CD8-positive, alpha-beta T cell (primary cell): ENCODE measurements at regions of chr13 and their contacts with region 1.

Region 1: GRCh38 chr13:74104661-74105275 is 29.4 kb downstream of the KLF12 start:
- DNase-seq: no peak
- ATAC-seq: no peak
- H3K4me3 ChIP-seq: no peak overlapping the region
- H3K4me3 Mint-ChIP-seq: no peak overlapping the region
- H3K27ac ChIP-seq: no peak overlapping the region
- H3K27ac Mint-ChIP-seq: no peak overlapping the region
- H3K4me1 ChIP-seq: peaks cover 15% of the 10 kb centered on the region
- H3K4me1 Mint-ChIP-seq: peaks cover 75% of the 10 kb centered on the region
- H3K27me3 ChIP-seq: no peaks in the 10 kb centered on the region
- H3K27me3 Mint-ChIP-seq: no peaks in the 10 kb centered on the region
- CTCF ChIP-seq: no peak

Region 2: DNA sequence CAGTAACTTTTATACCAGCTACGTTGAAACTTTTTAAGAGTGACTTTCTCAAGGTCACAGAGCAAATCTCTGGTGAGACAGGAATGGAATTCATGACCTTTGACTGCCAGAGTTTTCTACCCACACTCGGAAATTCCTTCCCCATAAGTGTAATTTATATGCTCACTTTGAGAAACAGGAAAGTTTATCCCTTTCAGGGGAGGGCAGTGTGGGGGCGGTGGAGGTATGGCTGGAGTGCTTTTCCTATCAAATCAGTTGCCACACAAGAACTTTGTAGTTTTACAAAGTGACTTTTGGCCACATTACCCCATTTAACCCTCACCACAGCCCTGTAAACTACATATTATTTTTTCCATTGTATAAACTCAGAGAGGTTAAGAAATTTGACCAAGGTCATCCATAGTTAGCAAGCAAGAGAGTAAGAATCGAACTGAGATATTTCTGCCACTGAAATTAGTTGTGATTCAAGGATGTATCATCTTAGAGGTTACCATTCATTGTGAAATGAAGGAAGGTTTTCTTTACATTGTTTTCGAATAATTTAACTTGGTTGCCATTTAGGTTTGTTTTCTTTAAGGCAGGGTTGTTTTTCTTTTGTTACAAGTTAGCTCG is 23.5 kb after region 1 on chr13:
- CTCF ChIA-PET with region 1: no interaction called
- POLR2A ChIA-PET with region 1: interaction called, 6 read pairs
- intact Hi-C with region 1: loop called in 1 of 2 experiments (anchors 2 kb)
- DNase-seq: no peak
- ATAC-seq: no peak
- H3K4me3 ChIP-seq: no peak overlapping the region
- H3K4me3 Mint-ChIP-seq: peak overlapping the region; percentile 47
- H3K27ac ChIP-seq: peak overlapping the region in 1 of 2 experiments; percentile 82
- H3K27ac Mint-ChIP-seq: peak overlapping the region; percentile 84
- H3K4me1 ChIP-seq: peaks cover 49% of the 10 kb centered on the region
- H3K4me1 Mint-ChIP-seq: peaks cover 79% of the 10 kb centered on the region
- H3K27me3 ChIP-seq: no peaks in the 10 kb centered on the region
- H3K27me3 Mint-ChIP-seq: no peaks in the 10 kb centered on the region
- CTCF ChIP-seq: no peak

Region 3: DNA sequence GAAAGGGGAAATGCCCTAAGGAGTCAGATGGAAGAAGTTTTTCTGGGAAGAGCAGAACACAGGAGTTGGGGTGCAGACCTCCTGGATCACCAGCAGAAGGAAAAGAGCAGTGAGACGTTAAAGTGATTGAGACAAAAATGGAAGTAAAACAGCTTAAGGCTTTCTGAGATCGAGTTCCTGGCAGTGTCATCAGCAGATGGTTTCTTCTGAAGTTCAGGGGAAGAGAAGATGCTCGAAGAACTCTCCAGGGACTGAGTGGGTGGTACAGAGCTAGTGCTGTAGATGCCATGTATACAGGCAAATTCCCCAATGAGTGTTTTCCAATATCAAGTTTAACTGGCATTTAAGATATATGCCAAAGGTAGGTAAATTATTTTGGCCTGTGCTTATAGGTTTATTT is 301.7 kb after region 1 on chr13:
- CTCF ChIA-PET with region 1: no interaction called
- POLR2A ChIA-PET with region 1: no interaction called
- intact Hi-C with region 1: no loop called
- DNase-seq: no peak
- ATAC-seq: no peak
- H3K4me3 ChIP-seq: no peak overlapping the region
- H3K4me3 Mint-ChIP-seq: no peak overlapping the region
- H3K27ac ChIP-seq: no peak overlapping the region
- H3K27ac Mint-ChIP-seq: no peak overlapping the region
- H3K4me1 ChIP-seq: no peaks in the 10 kb centered on the region
- H3K4me1 Mint-ChIP-seq: no peaks in the 10 kb centered on the region
- H3K27me3 ChIP-seq: no peaks in the 10 kb centered on the region
- H3K27me3 Mint-ChIP-seq: no peaks in the 10 kb centered on the region
- CTCF ChIP-seq: no peak